Activated naive CD4-positive, alpha-beta T cell treated with anti-CD3 and anti-CD28 coated beads for 36 hours (primary cell): ENCODE measurements at regions of chr10 and their contacts with region 1.

Region 1: GRCh38 chr10:27099916-27100812 is at the start of gene ANKRD26:
- DNase-seq: peak; percentile 96
- H3K4me3 Mint-ChIP-seq: peak within 1 kb of the TSS; percentile 83
- H3K27ac Mint-ChIP-seq: peak within 1 kb of the TSS; percentile 92
- H3K4me1 Mint-ChIP-seq: peaks cover 44% of the 10 kb centered on the region
- H3K27me3 Mint-ChIP-seq: peaks cover 2% of the 10 kb centered on the region
- total RNA-seq, gene ANKRD26: 4.6 to 6.6 TPM

Region 2: DNA sequence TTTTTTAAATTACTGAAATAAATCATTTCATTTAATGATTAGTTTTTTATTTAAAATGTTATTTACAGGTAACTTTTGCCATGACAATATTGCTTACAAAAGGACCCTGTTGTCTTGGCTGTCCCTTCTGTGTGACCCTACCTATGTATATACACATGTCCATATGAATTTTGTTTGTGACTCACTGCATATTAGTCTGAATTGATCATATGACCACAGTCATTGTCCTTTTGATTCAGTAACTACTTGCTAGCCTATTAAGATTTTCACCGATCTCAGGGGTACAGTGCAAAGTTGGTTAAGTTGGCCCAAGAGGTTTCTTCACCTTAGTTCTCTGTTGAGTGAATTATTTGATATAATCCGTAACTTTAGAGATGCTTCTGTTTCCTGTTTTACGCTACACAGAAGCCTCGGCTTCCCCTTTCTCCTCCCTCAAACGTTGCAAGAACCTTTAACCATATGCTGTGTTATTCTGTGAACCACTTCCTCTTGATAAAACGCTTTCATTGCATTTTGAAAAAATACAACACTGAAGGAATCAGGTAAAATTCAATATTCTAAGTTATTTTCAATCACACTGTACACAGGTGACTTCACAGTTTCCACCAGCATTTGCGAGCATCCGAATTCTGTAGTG is 618.1 kb before region 1 on chr10:
- CTCF ChIA-PET with region 1: no interaction called
- intact Hi-C with region 1: loop called (anchors 1 kb)
- DNase-seq: peak; percentile 48
- H3K4me3 Mint-ChIP-seq: peak overlapping the region; percentile 69
- H3K27ac Mint-ChIP-seq: peak overlapping the region; percentile 92
- H3K4me1 Mint-ChIP-seq: peaks cover 75% of the 10 kb centered on the region
- H3K27me3 Mint-ChIP-seq: no peaks in the 10 kb centered on the region

Region 3: GRCh38 chr10:26743091-26743490 is 357.1 kb before region 1 on chr10:
- CTCF ChIA-PET with region 1: no interaction called
- intact Hi-C with region 1: loop called (anchors 2 kb)
- DNase-seq: no peak
- H3K4me3 Mint-ChIP-seq: no peak overlapping the region
- H3K27ac Mint-ChIP-seq: peak overlapping the region; percentile 20
- H3K4me1 Mint-ChIP-seq: peaks cover 25% of the 10 kb centered on the region
- H3K27me3 Mint-ChIP-seq: no peaks in the 10 kb centered on the region

Region 4: GRCh38 chr10:26890956-26891355 is 209.2 kb before region 1 on chr10:
- CTCF ChIA-PET with region 1: no interaction called
- intact Hi-C with region 1: loop called (anchors 2 kb)
- DNase-seq: peak; percentile 64
- H3K4me3 Mint-ChIP-seq: no peak overlapping the region
- H3K27ac Mint-ChIP-seq: no peak overlapping the region
- H3K4me1 Mint-ChIP-seq: no peaks in the 10 kb centered on the region
- H3K27me3 Mint-ChIP-seq: no peaks in the 10 kb centered on the region

Region 5: GRCh38 chr10:27035163-27035562 is 65.0 kb before region 1 on chr10:
- CTCF ChIA-PET with region 1: no interaction called
- intact Hi-C with region 1: loop called (anchors 2 kb)
- DNase-seq: no peak
- H3K4me3 Mint-ChIP-seq: peak overlapping the region; percentile 25
- H3K27ac Mint-ChIP-seq: no peak overlapping the region
- H3K4me1 Mint-ChIP-seq: peaks cover 10% of the 10 kb centered on the region
- H3K27me3 Mint-ChIP-seq: no peaks in the 10 kb centered on the region